CD4-positive, alpha-beta T cell (primary cell): ENCODE measurements at regions of chr5 and their contacts with region 1.

Region 1: GRCh38 chr5:135944967-135945560 is 9.7 kb downstream of the LECT2 start:
- DNase-seq: peak in 4 of 14 experiments; percentile 29 to 67 (median 62)
- ATAC-seq: no peak
- H3K4me3 ChIP-seq: no peak overlapping the region
- H3K4me3 Mint-ChIP-seq: no peak overlapping the region
- H3K27ac ChIP-seq: no peak overlapping the region
- H3K27ac Mint-ChIP-seq: no peak overlapping the region
- H3K4me1 ChIP-seq: no peaks in the 10 kb centered on the region
- H3K4me1 Mint-ChIP-seq: no peaks in the 10 kb centered on the region
- H3K27me3 ChIP-seq: peaks cover 0 to 11% of the 10 kb centered on the region in 2 experiments
- H3K27me3 Mint-ChIP-seq: peaks cover 23% of the 10 kb centered on the region
- CTCF ChIP-seq: peak; percentile 55

Region 2: GRCh38 chr5:136062366-136063274 is 117.6 kb after region 1 on chr5:
- CTCF ChIA-PET with region 1: no interaction called
- POLR2A ChIA-PET with region 1: no interaction called
- intact Hi-C with region 1: loop called in 1 of 2 experiments (anchors 5 kb)
- DNase-seq: peak in 4 of 14 experiments; percentile 12 to 59 (median 48)
- ATAC-seq: no peak
- H3K4me3 ChIP-seq: no peak overlapping the region
- H3K4me3 Mint-ChIP-seq: no peak overlapping the region
- H3K27ac ChIP-seq: no peak overlapping the region
- H3K27ac Mint-ChIP-seq: no peak overlapping the region
- H3K4me1 ChIP-seq: no peaks in the 10 kb centered on the region
- H3K4me1 Mint-ChIP-seq: no peaks in the 10 kb centered on the region
- H3K27me3 ChIP-seq: no peaks in the 10 kb centered on the region
- H3K27me3 Mint-ChIP-seq: no peaks in the 10 kb centered on the region
- CTCF ChIP-seq: no peak

Region 3: DNA sequence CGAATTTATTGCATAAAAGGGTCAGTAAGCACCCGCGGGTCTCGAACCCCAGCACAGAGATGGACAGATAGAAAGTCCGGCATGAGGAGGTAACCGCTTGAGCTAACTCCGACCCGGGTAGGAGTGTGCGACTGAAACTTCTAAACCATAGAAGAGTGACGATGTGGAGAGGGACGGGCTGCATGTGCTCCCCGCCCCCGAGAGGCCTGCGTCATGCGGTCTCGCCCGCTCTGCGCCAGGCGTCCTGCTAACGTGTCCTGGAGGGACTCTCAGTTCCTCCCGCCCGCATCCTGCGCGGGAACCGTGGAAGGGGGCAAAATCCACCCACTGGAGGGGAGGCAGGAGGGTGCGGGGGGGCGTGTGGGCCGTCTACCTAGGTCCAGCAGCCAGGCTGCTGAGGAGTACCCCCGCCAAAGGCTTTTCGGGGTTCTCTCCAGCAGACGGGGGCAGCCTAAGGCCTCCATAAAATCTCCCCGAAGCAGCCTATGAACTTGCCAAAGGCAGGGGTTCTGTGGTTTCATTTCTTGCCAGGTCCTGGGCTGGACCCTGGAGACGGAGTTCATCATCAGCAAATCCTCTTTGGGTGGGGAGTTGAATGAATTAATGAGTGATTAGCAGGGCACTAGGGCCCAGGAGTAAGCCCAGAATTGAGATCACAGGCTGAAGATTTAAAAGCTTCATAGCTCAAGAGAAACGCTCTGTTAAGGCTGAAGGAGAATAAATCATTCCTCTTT is 135.6 kb after region 1 on chr5:
- CTCF ChIA-PET with region 1: interaction called, 3 read pairs
- POLR2A ChIA-PET with region 1: no interaction called
- intact Hi-C with region 1: loop called (anchors 1 to 2 kb)
- DNase-seq: peak; percentile 12 to 78 (median 47)
- ATAC-seq: peak; percentile 94
- H3K4me3 ChIP-seq: peak overlapping the region; percentile 29
- H3K4me3 Mint-ChIP-seq: peak overlapping the region; percentile 67
- H3K27ac ChIP-seq: no peak overlapping the region
- H3K27ac Mint-ChIP-seq: no peak overlapping the region
- H3K4me1 ChIP-seq: peaks cover 18% of the 10 kb centered on the region
- H3K4me1 Mint-ChIP-seq: no peaks in the 10 kb centered on the region
- H3K27me3 ChIP-seq: peaks cover 22 to 49% of the 10 kb centered on the region in 2 experiments
- H3K27me3 Mint-ChIP-seq: peaks cover 51% of the 10 kb centered on the region
- CTCF ChIP-seq: no peak

Region 4: GRCh38 chr5:136174021-136174659 is 229.1 kb after region 1 on chr5:
- CTCF ChIA-PET with region 1: no interaction called
- POLR2A ChIA-PET with region 1: no interaction called
- intact Hi-C with region 1: loop called in 1 of 2 experiments (anchors 10 kb)
- DNase-seq: peak in 3 of 14 experiments; percentile 14 to 17 (median 17)
- ATAC-seq: no peak
- H3K4me3 ChIP-seq: no peak overlapping the region
- H3K4me3 Mint-ChIP-seq: no peak overlapping the region
- H3K27ac ChIP-seq: no peak overlapping the region
- H3K27ac Mint-ChIP-seq: no peak overlapping the region
- H3K4me1 ChIP-seq: no peaks in the 10 kb centered on the region
- H3K4me1 Mint-ChIP-seq: no peaks in the 10 kb centered on the region
- H3K27me3 ChIP-seq: no peaks in the 10 kb centered on the region
- H3K27me3 Mint-ChIP-seq: no peaks in the 10 kb centered on the region
- CTCF ChIP-seq: no peak

Region 5: GRCh38 chr5:136212252-136212721 is 267.2 kb after region 1 on chr5:
- CTCF ChIA-PET with region 1: no interaction called
- POLR2A ChIA-PET with region 1: no interaction called
- intact Hi-C with region 1: loop called in 1 of 2 experiments (anchors 2 kb)
- DNase-seq: peak in 12 of 14 experiments; percentile 7 to 60 (median 22)
- ATAC-seq: no peak
- H3K4me3 ChIP-seq: no peak overlapping the region
- H3K4me3 Mint-ChIP-seq: no peak overlapping the region
- H3K27ac ChIP-seq: no peak overlapping the region
- H3K27ac Mint-ChIP-seq: no peak overlapping the region
- H3K4me1 ChIP-seq: no peaks in the 10 kb centered on the region
- H3K4me1 Mint-ChIP-seq: no peaks in the 10 kb centered on the region
- H3K27me3 ChIP-seq: peaks cover 0 to 4% of the 10 kb centered on the region in 2 experiments
- H3K27me3 Mint-ChIP-seq: peaks cover 27% of the 10 kb centered on the region
- CTCF ChIP-seq: peak; percentile 69